ENCODE measurements at regions of chr14 and their contacts with region 1.

Region 1: DNA sequence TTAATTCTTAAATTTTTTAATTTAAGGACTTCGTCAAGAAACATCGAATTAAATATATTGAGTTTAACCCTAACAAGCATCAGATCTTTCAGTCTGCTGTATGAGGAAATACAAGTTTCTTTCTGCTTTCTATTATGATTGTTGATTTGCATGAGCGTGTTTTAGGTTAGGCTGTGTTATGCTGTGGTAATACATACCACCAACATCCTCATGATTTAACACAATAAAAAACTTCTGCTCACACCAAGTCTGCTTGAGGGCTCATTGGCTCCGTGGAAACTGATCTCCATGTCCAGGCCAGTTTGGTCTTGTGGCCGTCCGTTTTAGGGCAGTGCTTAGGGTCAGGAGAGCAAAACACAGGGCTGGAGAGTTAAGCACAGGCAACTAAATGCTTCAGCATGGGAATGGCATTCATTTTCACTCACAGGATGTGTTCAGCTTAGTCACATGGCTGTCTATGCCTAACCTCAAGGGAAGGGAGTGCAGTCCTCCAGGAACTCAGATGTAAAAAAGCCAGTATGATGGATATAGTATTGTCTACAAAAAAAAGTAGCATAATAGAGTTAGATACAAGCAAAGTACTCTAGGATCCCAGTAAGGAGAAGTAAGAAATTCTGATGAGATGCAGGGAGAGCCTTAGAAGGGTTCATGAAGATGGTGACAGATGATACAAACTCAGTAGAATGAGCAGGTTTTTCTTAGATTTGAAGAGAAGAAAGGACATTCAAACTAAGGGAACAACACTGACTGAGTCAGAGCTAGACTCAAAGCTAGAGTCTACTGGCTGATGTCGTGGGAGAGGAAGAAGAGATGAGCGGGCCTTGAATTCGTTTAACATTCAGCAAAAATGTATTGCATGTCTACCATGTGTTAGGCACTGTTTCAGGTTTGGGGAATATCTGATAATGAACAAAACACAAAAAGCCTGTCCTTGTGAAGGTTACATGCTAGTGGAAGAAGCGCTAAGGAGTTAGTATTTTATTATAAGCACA is 16.3 kb downstream of the MARK3 start:
- DNase-seq: peak in 2 of 14 experiments; percentile 14 to 30
- ATAC-seq: peak; percentile 68
- H3K4me3 ChIP-seq: no peak overlapping the region
- H3K4me3 Mint-ChIP-seq: peak overlapping the region; percentile 11
- H3K27ac ChIP-seq: no peak overlapping the region
- H3K27ac Mint-ChIP-seq: peak overlapping the region; percentile 50
- H3K4me1 ChIP-seq: peaks cover 26% of the 10 kb centered on the region
- H3K4me1 Mint-ChIP-seq: peaks cover 77% of the 10 kb centered on the region
- H3K27me3 ChIP-seq: no peaks in the 10 kb centered on the region
- H3K27me3 Mint-ChIP-seq: no peaks in the 10 kb centered on the region
- CTCF ChIP-seq: no peak

Region 2: DNA sequence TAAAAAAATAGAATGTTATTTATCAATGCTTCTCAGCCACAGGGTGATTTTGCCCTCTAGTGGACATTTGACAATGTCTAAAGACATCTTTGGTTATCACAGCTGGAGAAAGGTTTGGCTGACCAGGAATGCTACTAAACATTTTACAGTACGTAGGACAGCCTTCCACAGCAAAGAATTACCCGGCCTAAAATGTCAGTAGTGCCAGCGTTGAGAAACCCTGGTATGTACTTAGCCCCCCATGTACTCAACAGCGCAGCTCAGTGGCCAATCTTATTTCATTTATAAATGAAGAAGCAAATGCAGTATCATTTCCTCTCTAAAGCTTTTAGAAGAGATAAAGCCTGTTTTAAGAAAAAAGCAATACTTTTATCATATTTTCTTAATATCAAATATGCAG is 10.5 kb before region 1 on chr14:
- CTCF ChIA-PET with region 1: interaction called, 10 read pairs
- POLR2A ChIA-PET with region 1: interaction called, 3 read pairs
- intact Hi-C with region 1: no loop called
- DNase-seq: peak; percentile 8 to 78 (median 38)
- ATAC-seq: peak; percentile 75
- H3K4me3 ChIP-seq: no peak overlapping the region
- H3K4me3 Mint-ChIP-seq: peak overlapping the region; percentile 72
- H3K27ac ChIP-seq: no peak overlapping the region
- H3K27ac Mint-ChIP-seq: peak overlapping the region; percentile 73
- H3K4me1 ChIP-seq: peaks cover 67% of the 10 kb centered on the region
- H3K4me1 Mint-ChIP-seq: peaks cover 77% of the 10 kb centered on the region
- H3K27me3 ChIP-seq: no peaks in the 10 kb centered on the region
- H3K27me3 Mint-ChIP-seq: no peaks in the 10 kb centered on the region
- CTCF ChIP-seq: peak; percentile 90

Region 3: DNA sequence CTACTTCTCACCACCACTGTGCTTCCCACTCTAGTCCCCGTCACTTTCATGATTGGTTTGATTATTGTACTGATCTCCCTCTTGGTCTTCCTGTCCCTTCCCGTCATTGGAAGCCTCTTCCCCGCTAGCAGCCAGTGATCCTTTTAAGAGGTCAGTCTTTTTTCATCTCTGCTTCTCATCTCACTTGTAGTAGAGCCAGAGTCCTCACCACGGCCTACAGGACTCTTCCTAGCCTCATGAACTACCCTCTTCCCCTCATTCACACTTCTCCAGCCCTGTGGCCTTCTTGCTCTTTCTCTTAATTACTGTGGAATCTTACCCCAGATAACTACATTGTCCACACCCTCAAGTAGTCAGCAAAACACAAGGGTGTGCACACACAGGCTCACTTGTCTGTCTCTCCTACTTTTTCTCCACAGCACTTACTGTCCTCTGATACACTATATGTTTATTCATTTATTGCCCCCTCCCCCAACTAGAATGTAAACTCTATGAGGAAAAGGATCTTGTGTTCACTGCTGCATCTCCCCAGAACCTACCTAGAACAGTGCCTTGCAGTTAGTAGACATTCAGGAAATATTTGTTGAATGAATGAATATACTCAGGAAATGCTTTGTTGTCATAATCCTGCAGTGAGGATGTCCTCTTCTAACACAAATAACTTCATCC is 54.8 kb after region 1 on chr14:
- CTCF ChIA-PET with region 1: no interaction called
- POLR2A ChIA-PET with region 1: no interaction called
- intact Hi-C with region 1: loop called in 1 of 2 experiments (anchors 10 kb)
- DNase-seq: no peak
- ATAC-seq: no peak
- H3K4me3 ChIP-seq: no peak overlapping the region
- H3K4me3 Mint-ChIP-seq: no peak overlapping the region
- H3K27ac ChIP-seq: no peak overlapping the region
- H3K27ac Mint-ChIP-seq: peak overlapping the region; percentile 29
- H3K4me1 ChIP-seq: peaks cover 7% of the 10 kb centered on the region
- H3K4me1 Mint-ChIP-seq: peaks cover 42% of the 10 kb centered on the region
- H3K27me3 ChIP-seq: no peaks in the 10 kb centered on the region
- H3K27me3 Mint-ChIP-seq: no peaks in the 10 kb centered on the region
- CTCF ChIP-seq: no peak

Measured in CD4-positive, alpha-beta T cell (primary cell).